PC-9 (cell line): ENCODE measurements at regions of chr17 and their contacts with region 1.

Region 1: DNA sequence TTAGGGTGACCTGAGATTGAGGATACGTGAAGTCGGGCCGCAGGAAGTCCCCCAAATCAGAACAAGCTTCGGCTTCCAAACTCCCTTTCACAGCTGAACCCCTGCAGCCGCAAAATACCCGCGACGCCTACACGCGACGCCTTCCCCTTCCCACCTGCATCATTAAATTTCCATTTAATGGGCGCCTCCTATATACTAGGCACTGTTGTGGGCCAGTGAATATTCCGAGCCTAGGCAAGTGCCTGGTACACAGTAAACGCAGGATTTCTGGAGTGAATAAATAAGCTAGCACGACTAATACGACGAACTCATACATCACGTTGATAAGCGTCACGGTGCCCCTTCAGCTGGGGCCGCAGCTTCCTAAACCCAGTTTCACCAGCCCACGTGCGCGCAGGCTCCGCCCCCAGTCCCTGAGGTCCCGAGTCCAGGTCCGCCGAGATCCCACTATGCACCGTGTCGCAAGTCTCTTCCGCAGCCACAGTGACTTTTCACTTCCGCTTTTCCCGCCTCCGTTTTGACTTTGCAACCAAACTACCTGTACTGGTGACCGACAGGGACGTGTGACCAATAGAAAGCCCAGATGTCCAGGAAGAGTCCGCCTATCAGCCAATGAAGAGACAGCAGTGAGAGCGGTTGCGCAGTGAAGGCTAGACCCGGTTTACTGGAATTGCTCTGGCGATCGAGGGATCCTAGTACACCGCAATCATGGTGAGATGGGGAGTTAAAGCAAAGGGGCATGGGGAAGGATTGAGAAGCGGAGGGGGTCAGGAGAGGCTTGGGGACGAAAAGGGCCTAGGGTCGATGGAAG is at the start of gene PSMB3:
- DNase-seq: peak; percentile 95 to 99
- H3K4me3 ChIP-seq: peak within 1 kb of the TSS; percentile 92
- H3K27ac ChIP-seq: peak within 1 kb of the TSS; percentile 79
- H3K4me1 ChIP-seq: peaks cover 10% of the 10 kb centered on the region
- H3K27me3 ChIP-seq: no peaks in the 10 kb centered on the region
- CTCF ChIP-seq: no peak
- total RNA-seq, gene PSMB3: 262 and 278 TPM in 2 replicates

Region 2: DNA sequence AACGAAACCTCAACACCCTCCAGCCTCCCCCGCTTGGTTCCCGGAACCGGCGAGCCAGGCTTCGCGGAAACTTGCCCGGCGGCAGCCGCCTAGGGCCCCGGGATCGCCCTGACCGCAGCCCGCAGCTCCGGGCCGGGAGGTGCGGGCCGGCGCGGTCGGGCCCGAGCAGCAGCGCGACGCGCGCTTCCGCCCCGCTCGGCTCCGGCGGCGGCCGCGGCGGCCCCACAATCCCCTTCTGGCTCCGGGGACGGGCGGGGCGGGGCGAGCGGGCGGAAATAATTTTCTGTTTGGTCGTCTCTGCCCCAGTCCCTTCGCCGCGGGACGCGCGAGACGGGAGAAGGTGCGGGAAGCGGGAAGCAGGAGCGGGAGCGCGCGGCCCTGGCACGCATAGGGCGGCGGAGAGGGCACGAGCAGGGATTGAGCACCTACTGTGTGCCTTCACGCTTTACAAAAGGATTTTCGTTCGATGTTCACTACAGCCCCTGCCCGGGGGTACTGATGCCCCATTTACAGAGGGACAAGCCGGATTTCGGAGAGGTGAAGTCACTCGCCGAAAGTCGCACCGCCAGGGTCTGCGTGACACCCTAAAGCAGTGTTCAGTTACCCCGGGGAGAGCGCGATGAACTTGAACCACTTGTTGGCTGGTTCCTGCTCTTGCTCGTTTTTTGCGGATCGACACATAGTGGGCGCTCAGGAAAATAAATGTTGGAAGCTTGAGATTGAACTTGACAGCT is 50.0 kb before region 1 on chr17:
- CTCF ChIA-PET with region 1: no interaction called
- POLR2A ChIA-PET with region 1: no interaction called
- intact Hi-C with region 1: loop called (anchors 2 kb)
- DNase-seq: peak; percentile 78 to 82
- H3K4me3 ChIP-seq: peak overlapping the region; percentile 99
- H3K27ac ChIP-seq: peak overlapping the region; percentile 82
- H3K4me1 ChIP-seq: peaks cover 23% of the 10 kb centered on the region
- H3K27me3 ChIP-seq: no peaks in the 10 kb centered on the region
- CTCF ChIP-seq: no peak

Region 3: DNA sequence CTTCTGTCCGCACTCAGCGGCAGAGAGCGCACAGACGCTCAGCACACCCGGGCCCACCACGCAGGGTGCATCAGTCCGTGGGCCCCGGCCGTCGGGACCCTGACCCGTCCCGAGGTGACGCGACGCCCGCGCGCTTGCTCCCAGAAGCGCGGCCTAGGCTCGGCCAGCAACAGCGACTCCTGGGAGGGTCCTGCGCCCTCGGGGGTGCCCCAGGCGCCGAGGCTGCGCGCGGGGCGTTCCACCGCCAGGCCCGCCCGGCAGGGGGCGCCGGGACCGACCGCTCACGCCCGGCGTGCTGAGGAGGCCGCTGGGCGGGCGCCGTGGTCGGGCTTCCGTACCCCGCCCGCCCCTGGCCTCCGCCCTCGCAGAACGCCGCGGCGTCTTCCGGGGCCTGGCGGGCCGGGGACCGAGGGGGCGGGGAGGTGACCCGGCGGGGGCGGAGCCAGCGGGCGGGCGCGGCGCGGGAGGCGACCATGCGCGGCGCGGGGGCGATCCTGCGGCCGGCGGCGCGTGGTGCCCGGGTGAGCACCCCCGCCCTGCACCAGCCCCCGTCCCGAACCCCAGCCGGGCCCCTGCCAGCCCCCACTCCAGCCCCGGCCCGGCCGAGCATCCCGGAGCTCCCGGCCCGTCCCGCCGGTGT is 22.3 kb before region 1 on chr17 and contains the start of gene CISD3:
- CTCF ChIA-PET with region 1: no interaction called
- POLR2A ChIA-PET with region 1: no interaction called
- intact Hi-C with region 1: no loop called
- DNase-seq: peak; percentile 64 to 85
- H3K4me3 ChIP-seq: peak within 1 kb of the TSS; percentile 96
- H3K27ac ChIP-seq: peak within 1 kb of the TSS; percentile 12; the same call in 1 of the 2 replicates
- H3K4me1 ChIP-seq: peaks cover 11% of the 10 kb centered on the region
- H3K27me3 ChIP-seq: no peaks in the 10 kb centered on the region
- CTCF ChIP-seq: peak; percentile 61
- total RNA-seq, gene CISD3: 36.6 and 38.1 TPM in 2 replicates

Region 4: GRCh38 chr17:38799378-38800236 is 47.3 kb after region 1 on chr17 and contains the start of gene PIP4K2B:
- CTCF ChIA-PET with region 1: no interaction called
- POLR2A ChIA-PET with region 1: no interaction called
- intact Hi-C with region 1: loop called (anchors 5 kb)
- DNase-seq: peak; percentile 89 to 95
- H3K4me3 ChIP-seq: peak within 1 kb of the TSS; percentile 92
- H3K27ac ChIP-seq: peak within 1 kb of the TSS; percentile 96
- H3K4me1 ChIP-seq: peaks cover 23% of the 10 kb centered on the region
- H3K27me3 ChIP-seq: no peaks in the 10 kb centered on the region
- CTCF ChIP-seq: no peak
- total RNA-seq, gene PIP4K2B: 40.6 and 47.4 TPM in 2 replicates

Region 5: GRCh38 chr17:38824899-38825761 is 72.8 kb after region 1 on chr17 and contains the start of gene CWC25:
- CTCF ChIA-PET with region 1: no interaction called
- POLR2A ChIA-PET with region 1: interaction called, 13 read pairs
- intact Hi-C with region 1: no loop called
- DNase-seq: peak; percentile 81 to 94
- H3K4me3 ChIP-seq: peak within 1 kb of the TSS; percentile 82
- H3K27ac ChIP-seq: peak within 1 kb of the TSS; percentile 97
- H3K4me1 ChIP-seq: peaks cover 16% of the 10 kb centered on the region
- H3K27me3 ChIP-seq: no peaks in the 10 kb centered on the region
- CTCF ChIP-seq: no peak
- total RNA-seq, gene CWC25: 13.7 and 13.9 TPM in 2 replicates

Region 6: DNA sequence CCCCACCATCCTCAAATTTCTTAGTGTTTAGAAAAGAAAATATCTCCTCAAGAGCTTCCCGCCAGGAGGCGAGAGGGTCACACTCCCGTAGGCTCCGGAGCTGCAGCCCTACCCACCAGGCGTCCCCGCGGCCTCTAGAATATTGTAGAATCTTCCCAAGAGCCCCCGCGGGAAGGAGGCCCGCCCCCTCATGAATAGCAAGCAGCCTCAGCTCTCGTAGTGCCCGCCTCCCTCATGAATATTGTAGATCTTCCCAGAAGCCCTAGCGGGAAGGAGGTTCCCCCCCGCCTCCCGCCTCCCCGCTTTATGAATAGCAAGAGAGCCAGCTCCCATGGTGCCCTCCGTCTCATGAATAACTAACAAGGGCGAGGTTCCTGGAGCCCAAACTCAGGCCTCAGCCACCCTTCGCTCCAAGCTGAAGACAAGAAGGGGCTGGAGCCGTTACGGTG is 215.0 kb after region 1 on chr17 and contains the start of gene FBXO47:
- CTCF ChIA-PET with region 1: no interaction called
- POLR2A ChIA-PET with region 1: no interaction called
- intact Hi-C with region 1: loop called (anchors 5 kb)
- DNase-seq: peak; percentile 75 to 89
- H3K4me3 ChIP-seq: peak within 1 kb of the TSS; percentile 47; the same call in 1 of the 2 replicates
- H3K27ac ChIP-seq: no peak within 1 kb of the TSS
- H3K4me1 ChIP-seq: no peaks in the 10 kb centered on the region
- H3K27me3 ChIP-seq: no peaks in the 10 kb centered on the region
- CTCF ChIP-seq: no peak
- total RNA-seq, gene FBXO47: not detected in 2 replicates

Region 7: GRCh38 chr17:39173526-39174274 is 421.4 kb after region 1 on chr17:
- CTCF ChIA-PET with region 1: interaction called, 12 read pairs
- POLR2A ChIA-PET with region 1: no interaction called
- intact Hi-C with region 1: no loop called
- DNase-seq: no peak
- H3K4me3 ChIP-seq: no peak overlapping the region
- H3K27ac ChIP-seq: no peak overlapping the region
- H3K4me1 ChIP-seq: peaks cover 6% of the 10 kb centered on the region
- H3K27me3 ChIP-seq: no peaks in the 10 kb centered on the region
- CTCF ChIP-seq: no peak